Colonic mucosa (tissue), 4 donors: ENCODE measurements at regions of chr1 and their contacts with region 1.

Region 1: GRCh38 chr1:168794057-168794456 is 65.1 kb upstream of the DPT start:
- DNase-seq: no peak
- H3K4me3 ChIP-seq: no peak overlapping the region
- H3K27ac ChIP-seq: no peak overlapping the region
- H3K4me1 ChIP-seq: no peaks in the 10 kb centered on the region
- H3K27me3 ChIP-seq: no peaks in the 10 kb centered on the region
- CTCF ChIP-seq: no peak

Region 2: DNA sequence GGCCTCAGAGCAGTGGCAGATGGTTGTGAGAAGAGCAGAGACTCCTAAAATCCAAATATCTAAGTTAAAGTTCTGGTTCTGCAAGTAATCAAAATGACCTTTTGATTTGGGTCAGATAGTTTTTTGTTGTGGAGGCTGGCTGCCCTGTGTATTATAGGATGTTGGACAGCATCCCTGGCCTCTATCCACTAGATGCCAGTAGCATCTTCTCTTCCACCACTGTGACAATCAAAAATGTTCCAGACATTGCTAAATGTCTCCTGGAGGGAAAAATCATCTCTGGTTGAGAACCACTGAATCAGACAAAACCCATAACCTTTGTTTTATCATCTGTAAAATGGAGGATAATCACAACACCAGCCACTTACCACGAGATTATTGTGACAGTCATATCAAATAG is 59.1 kb before region 1 on chr1:
- intact Hi-C with region 1: loop called (anchors 5 kb)
- DNase-seq: no peak
- H3K4me3 ChIP-seq: no peak overlapping the region
- H3K27ac ChIP-seq: no peak overlapping the region
- H3K4me1 ChIP-seq: no peaks in the 10 kb centered on the region
- H3K27me3 ChIP-seq: no peaks in the 10 kb centered on the region
- CTCF ChIP-seq: no peak

Region 3: DNA sequence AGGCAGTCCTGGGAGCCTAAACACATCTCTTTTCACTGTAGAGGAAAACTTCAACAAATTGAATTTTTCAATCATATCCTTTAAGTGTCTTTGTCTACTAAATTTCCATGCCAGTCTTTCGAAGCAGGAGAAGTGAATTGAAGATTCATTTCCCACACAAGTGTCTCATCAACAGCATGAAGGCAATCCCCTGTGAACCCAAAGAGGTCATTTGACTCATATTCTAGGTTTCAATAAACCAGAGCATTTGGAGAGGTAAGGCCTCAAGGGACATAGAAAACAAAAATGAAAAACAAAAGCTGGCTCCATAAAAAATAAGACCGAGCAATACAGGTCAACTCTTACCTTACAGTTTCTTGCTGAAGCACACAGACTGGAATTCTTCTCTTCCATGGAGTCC is 218.4 kb after region 1 on chr1:
- intact Hi-C with region 1: no loop called
- DNase-seq: no peak
- H3K4me3 ChIP-seq: no peak overlapping the region
- H3K27ac ChIP-seq: no peak overlapping the region
- H3K4me1 ChIP-seq: no peaks in the 10 kb centered on the region
- H3K27me3 ChIP-seq: no peaks in the 10 kb centered on the region
- CTCF ChIP-seq: no peak